Activated B cell treated with CpG ODN at 0.5 μM for 24 hours (primary cell): ENCODE measurements at regions of chr3 and their contacts with region 1.

Region 1: DNA sequence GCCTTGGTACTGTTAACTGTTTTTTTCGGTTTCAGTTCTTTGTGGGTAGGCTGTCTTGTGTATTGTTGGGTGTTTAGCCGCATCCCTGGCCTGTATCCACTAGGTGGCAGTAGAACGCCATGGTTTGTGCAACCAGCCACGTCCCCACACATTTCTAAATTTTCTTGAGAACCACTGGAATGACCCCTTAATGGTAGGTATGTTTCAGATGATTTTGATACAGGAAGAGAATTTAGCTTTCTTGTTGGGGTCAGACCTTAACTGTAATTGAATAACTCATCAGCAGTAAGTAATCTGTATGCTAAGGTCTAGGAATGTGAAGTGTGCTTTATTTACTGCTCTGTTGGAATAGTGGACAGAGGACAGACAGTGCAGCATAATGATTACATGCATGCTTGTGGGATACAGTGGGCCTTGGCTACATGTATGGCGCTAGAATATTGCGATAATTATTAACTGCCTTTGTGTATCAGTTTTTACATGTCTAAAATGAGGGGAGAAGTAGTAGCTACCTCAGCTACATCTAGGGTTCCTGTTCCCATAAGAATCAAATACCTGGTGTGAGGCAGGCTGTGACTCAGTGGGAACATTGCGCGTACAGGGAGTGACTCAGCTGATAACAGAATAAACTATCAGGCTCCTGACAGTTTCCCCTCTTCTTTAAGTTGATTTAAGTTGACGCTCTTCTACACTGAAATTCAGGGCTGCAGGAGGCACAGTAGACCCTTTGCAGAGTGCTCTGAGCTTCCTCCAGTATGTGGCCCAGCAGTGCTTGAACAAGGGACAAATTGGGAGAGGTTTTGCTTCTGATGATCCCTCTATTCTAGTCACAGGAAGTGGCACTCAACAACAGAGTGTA is 25.0 kb upstream of the GPR171 start:
- DNase-seq: peak; percentile 58
- ATAC-seq: peak; percentile 86
- H3K4me3 Mint-ChIP-seq: no peak overlapping the region
- H3K27ac Mint-ChIP-seq: peak overlapping the region; percentile 65
- H3K4me1 Mint-ChIP-seq: peaks cover 44% of the 10 kb centered on the region
- H3K27me3 Mint-ChIP-seq: no peaks in the 10 kb centered on the region
- CTCF ChIP-seq: peak; percentile 94

Region 2: GRCh38 chr3:150168698-150169097 is 1059.3 kb before region 1 on chr3:
- CTCF ChIA-PET with region 1: no interaction called
- POLR2A ChIA-PET with region 1: no interaction called
- intact Hi-C with region 1: no loop called
- DNase-seq: no peak
- ATAC-seq: no peak
- H3K4me3 Mint-ChIP-seq: no peak overlapping the region
- H3K27ac Mint-ChIP-seq: no peak overlapping the region
- H3K4me1 Mint-ChIP-seq: no peaks in the 10 kb centered on the region
- H3K27me3 Mint-ChIP-seq: peaks cover 10% of the 10 kb centered on the region
- CTCF ChIP-seq: no peak

Region 3: GRCh38 chr3:150925751-150926201 is 302.3 kb before region 1 on chr3:
- CTCF ChIA-PET with region 1: no interaction called
- POLR2A ChIA-PET with region 1: no interaction called
- intact Hi-C with region 1: loop called (anchors 5 kb)
- DNase-seq: peak; percentile 46
- ATAC-seq: peak; percentile 84
- H3K4me3 Mint-ChIP-seq: peak overlapping the region; percentile 75
- H3K27ac Mint-ChIP-seq: no peak overlapping the region
- H3K4me1 Mint-ChIP-seq: peaks cover 9% of the 10 kb centered on the region
- H3K27me3 Mint-ChIP-seq: peaks cover 12% of the 10 kb centered on the region
- CTCF ChIP-seq: no peak

Region 4: GRCh38 chr3:151248772-151249337 is 20.8 kb after region 1 on chr3:
- CTCF ChIA-PET with region 1: interaction called, 3 read pairs
- POLR2A ChIA-PET with region 1: no interaction called
- intact Hi-C with region 1: loop called (anchors 2 kb)
- DNase-seq: no peak
- ATAC-seq: no peak
- H3K4me3 Mint-ChIP-seq: no peak overlapping the region
- H3K27ac Mint-ChIP-seq: no peak overlapping the region
- H3K4me1 Mint-ChIP-seq: peaks cover 3% of the 10 kb centered on the region
- H3K27me3 Mint-ChIP-seq: no peaks in the 10 kb centered on the region
- CTCF ChIP-seq: no peak

Region 5: DNA sequence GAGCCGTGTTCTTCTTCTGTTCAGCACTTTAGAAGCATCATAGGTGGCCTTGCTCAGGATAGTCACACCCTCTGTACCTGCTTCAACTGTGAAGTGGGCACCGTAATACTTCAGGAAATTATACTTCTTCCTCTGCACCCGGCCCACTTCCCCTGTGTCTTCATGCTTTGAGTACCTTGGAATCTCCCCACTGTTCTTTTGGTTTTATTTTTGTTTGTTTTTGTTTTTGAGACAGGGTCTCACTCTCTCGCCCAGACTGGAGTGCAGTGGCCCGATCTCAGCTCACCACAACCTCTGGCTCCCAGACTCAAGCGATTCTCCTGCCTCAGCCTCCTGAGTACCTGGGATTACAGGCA is 48.6 kb after region 1 on chr3:
- CTCF ChIA-PET with region 1: interaction called, 237 read pairs
- POLR2A ChIA-PET with region 1: interaction called, 91 read pairs
- intact Hi-C with region 1: loop called (anchors 1 kb)
- DNase-seq: peak; percentile 33
- ATAC-seq: peak; percentile 77
- H3K4me3 Mint-ChIP-seq: peak overlapping the region; percentile 75
- H3K27ac Mint-ChIP-seq: peak overlapping the region; percentile 97
- H3K4me1 Mint-ChIP-seq: peaks cover 82% of the 10 kb centered on the region
- H3K27me3 Mint-ChIP-seq: no peaks in the 10 kb centered on the region
- CTCF ChIP-seq: no peak

Region 6: DNA sequence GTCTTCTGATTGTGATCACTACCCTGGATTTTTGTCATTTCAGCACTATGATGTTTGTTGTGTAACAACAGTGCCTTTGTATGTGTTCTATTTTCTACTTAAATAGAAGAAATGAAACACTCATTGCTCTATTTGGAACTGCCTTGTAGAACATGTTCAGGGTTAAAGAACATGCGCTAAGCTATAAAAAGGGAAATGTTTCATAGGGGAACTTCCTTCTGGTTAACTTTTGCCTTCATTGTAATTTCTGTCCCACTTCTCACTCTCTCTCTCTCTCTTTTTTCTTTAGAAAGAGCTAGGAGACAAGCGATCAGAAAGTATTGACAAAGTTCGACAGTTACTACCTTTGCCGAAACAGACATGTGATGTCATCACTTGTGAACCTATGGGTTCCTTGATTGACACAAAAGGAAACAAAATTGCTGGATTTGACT is 156.7 kb after region 1 on chr3 and contains the start of gene P2RY12:
- CTCF ChIA-PET with region 1: no interaction called
- POLR2A ChIA-PET with region 1: no interaction called
- intact Hi-C with region 1: loop called (anchors 5 kb)
- DNase-seq: no peak
- ATAC-seq: peak; percentile 29
- H3K4me3 Mint-ChIP-seq: peak within 1 kb of the TSS; percentile 79
- H3K27ac Mint-ChIP-seq: peak within 1 kb of the TSS; percentile 97
- H3K4me1 Mint-ChIP-seq: peaks cover 76% of the 10 kb centered on the region
- H3K27me3 Mint-ChIP-seq: no peaks in the 10 kb centered on the region
- CTCF ChIP-seq: no peak
- total RNA-seq, gene P2RY12: 0.58 and 0.64 TPM in 2 replicates

Region 7: DNA sequence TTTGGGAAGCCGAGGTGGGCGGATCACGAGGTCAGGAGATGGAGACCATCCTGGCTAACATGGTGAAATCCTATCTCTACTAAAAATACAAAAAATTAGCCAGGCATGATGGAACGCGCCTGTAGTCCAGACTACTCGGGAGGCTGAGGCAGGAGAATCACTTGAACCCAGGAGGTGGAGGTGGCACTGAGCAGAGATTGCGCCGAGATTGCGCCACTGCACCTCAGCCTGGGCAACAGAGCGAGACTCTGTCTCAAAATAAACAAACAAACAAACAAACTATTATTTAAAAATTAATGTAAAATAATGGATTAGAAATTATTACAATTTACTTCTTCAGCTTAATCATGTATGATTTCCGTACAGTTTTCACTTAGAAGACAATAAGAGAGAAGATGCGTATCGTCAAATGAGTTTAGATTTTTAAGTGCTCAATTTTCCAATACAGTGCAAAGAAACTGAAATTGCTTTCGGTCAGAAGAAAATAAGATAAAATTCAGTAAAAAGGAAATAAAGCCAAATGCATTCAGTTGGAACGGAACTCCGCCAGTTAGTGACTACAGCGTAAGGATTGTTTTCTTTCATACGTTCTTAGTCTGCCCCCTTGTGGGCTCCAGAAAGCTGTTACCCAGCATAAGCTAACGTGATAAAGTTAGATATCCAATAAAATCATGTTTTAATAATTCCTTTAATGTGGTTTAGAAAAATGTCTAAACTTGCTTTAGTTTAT is 610.7 kb after region 1 on chr3:
- CTCF ChIA-PET with region 1: interaction called, 9 read pairs
- POLR2A ChIA-PET with region 1: no interaction called
- intact Hi-C with region 1: loop called (anchors 1 kb)
- DNase-seq: no peak
- ATAC-seq: peak; percentile 68
- H3K4me3 Mint-ChIP-seq: no peak overlapping the region
- H3K27ac Mint-ChIP-seq: no peak overlapping the region
- H3K4me1 Mint-ChIP-seq: no peaks in the 10 kb centered on the region
- H3K27me3 Mint-ChIP-seq: peaks cover 3% of the 10 kb centered on the region
- CTCF ChIP-seq: peak; percentile 55